Naive thymus-derived CD4-positive, alpha-beta T cell (primary cell): ENCODE measurements at regions of chr9 and their contacts with region 1.

Region 1: DNA sequence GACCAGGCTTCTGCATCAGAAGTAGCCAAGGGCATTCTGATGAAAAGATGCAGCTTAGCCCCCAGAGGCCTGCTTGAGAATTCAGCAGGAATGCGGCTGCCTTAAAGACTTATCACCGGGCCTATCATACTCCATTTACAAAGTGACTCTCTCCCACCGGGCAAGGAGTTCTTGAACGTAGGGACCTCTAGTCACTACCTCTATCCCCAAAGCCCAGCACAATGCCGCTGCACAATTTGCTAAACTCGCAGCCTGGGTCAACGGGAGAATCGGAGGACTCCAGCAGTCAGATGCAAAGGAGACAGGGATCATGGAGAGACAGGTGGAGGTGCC is 661 bp downstream of the PDCL start:
- DNase-seq: peak in 1 of 9 donors; percentile 11
- ATAC-seq: no peak
- H3K4me3 ChIP-seq: peak overlapping the region; percentile 97
- H3K4me3 Mint-ChIP-seq: peak overlapping the region; percentile 97 to 100 (median 99)
- H3K27ac ChIP-seq: peak overlapping the region; percentile 99
- H3K27ac Mint-ChIP-seq: peak overlapping the region; percentile 92 to 98 (median 98)
- H3K4me1 ChIP-seq: peaks cover 9 to 11% of the 10 kb centered on the region in 2 donors
- H3K4me1 Mint-ChIP-seq: peaks cover 23 to 51% (median 42%) of the 10 kb centered on the region in 7 donors
- H3K27me3 ChIP-seq: no peaks in the 10 kb centered on the region
- H3K27me3 Mint-ChIP-seq: no peaks in the 10 kb centered on the region

Region 2: DNA sequence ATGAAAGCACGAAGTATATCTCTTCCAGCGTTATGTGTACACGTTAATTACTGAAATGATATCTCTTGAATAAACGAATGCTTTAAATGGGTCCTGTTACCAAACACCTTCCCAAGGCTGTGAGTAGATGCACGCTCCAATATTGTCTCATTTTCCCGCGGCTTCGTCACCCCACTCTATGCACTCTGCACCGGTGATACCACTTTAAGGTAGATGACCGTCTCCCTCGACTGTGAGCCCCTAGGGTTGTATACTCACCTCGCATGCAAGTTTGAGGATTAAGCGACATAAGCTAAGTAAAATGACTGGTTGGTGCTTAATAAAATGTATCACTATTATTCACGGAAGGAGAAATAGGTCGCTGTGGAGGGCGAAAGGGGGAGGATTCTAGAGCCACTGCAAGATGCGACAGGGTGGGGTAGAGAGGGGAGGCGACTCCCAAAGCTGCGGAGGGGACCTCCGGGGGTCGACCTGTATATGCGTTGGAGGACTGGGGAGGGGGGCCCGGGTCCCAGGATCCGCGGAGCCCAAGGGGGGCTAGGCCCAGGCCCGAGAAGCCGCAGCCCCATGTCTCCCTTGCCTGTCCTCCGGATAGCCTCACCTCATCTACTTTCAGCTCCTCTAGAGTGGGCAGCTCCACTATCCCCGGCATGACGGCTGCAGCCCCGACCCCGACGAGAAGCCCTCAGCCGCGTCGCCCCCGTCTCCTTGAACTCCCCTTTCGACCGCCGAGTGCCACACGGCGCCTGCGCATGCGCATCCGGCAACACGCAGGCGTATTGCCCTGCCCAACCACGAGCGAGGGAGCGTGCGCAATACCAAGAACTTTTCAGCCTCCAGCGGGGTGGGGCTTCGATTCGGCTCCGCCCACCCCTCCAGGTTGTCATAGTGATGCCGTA is 668.5 kb before region 1 on chr9 and contains the starts of genes MORN5 and NDUFA8:
- CTCF ChIA-PET with region 1: no interaction called
- POLR2A ChIA-PET with region 1: no interaction called
- intact Hi-C with region 1: loop called in 1 of 2 experiments (anchors 5 kb)
- DNase-seq: peak; percentile 94 to 97 (median 96)
- ATAC-seq: peak; percentile 98
- H3K4me3 ChIP-seq: peak within 1 kb of the TSS; percentile 74
- H3K4me3 Mint-ChIP-seq: peak within 1 kb of the TSS; percentile 94 to 100 (median 99)
- H3K27ac ChIP-seq: peak within 1 kb of the TSS; percentile 88
- H3K27ac Mint-ChIP-seq: peak within 1 kb of the TSS; percentile 90 to 99 (median 96)
- H3K4me1 ChIP-seq: peaks cover 7% of the 10 kb centered on the region in 2 donors
- H3K4me1 Mint-ChIP-seq: peaks cover 23 to 51% (median 47%) of the 10 kb centered on the region in 7 donors
- H3K27me3 ChIP-seq: no peaks in the 10 kb centered on the region
- H3K27me3 Mint-ChIP-seq: peaks cover 8 to 25% (median 20%) of the 10 kb centered on the region in 5 donors
- total RNA-seq, gene MORN5: not detected
- total RNA-seq, gene NDUFA8: 6.7 to 35.0 (median 15.6) TPM

Region 3: GRCh38 chr9:122719218-122719617 is 108.5 kb before region 1 on chr9:
- CTCF ChIA-PET with region 1: no interaction called
- POLR2A ChIA-PET with region 1: no interaction called
- intact Hi-C with region 1: no loop called
- DNase-seq: no peak
- ATAC-seq: no peak
- H3K4me3 ChIP-seq: no peak overlapping the region
- H3K4me3 Mint-ChIP-seq: no peak overlapping the region
- H3K27ac ChIP-seq: no peak overlapping the region
- H3K27ac Mint-ChIP-seq: no peak overlapping the region
- H3K4me1 ChIP-seq: no peaks in the 10 kb centered on the region
- H3K4me1 Mint-ChIP-seq: no peaks in the 10 kb centered on the region
- H3K27me3 ChIP-seq: no peaks in the 10 kb centered on the region
- H3K27me3 Mint-ChIP-seq: peaks cover 0 to under 1% (median 0%) of the 10 kb centered on the region in 5 donors

Region 4: GRCh38 chr9:122816163-122816867 is 11.4 kb before region 1 on chr9:
- CTCF ChIA-PET with region 1: interaction called, 9 read pairs
- POLR2A ChIA-PET with region 1: interaction called, 50 read pairs
- intact Hi-C with region 1: loop called (anchors 1 kb)
- DNase-seq: peak in 8 of 9 donors; percentile 16 to 54 (median 46)
- ATAC-seq: peak; percentile 89
- H3K4me3 ChIP-seq: peak overlapping the region; percentile 29
- H3K4me3 Mint-ChIP-seq: peak overlapping the region; percentile 67 to 89 (median 81)
- H3K27ac ChIP-seq: peak overlapping the region; percentile 69
- H3K27ac Mint-ChIP-seq: peak overlapping the region; percentile 91 to 98 (median 97)
- H3K4me1 ChIP-seq: peaks cover 12% of the 10 kb centered on the region in 2 donors
- H3K4me1 Mint-ChIP-seq: peaks cover 19 to 53% (median 41%) of the 10 kb centered on the region in 7 donors
- H3K27me3 ChIP-seq: no peaks in the 10 kb centered on the region
- H3K27me3 Mint-ChIP-seq: no peaks in the 10 kb centered on the region

Region 5: GRCh38 chr9:122860317-122861142 is 32.8 kb after region 1 on chr9:
- CTCF ChIA-PET with region 1: no interaction called
- POLR2A ChIA-PET with region 1: no interaction called
- intact Hi-C with region 1: no loop called
- DNase-seq: no peak
- ATAC-seq: no peak
- H3K4me3 ChIP-seq: no peak overlapping the region
- H3K4me3 Mint-ChIP-seq: no peak overlapping the region
- H3K27ac ChIP-seq: no peak overlapping the region
- H3K27ac Mint-ChIP-seq: no peak overlapping the region
- H3K4me1 ChIP-seq: no peaks in the 10 kb centered on the region
- H3K4me1 Mint-ChIP-seq: peaks cover 0 to 6% (median 0%) of the 10 kb centered on the region in 7 donors
- H3K27me3 ChIP-seq: no peaks in the 10 kb centered on the region
- H3K27me3 Mint-ChIP-seq: no peaks in the 10 kb centered on the region

Region 6: DNA sequence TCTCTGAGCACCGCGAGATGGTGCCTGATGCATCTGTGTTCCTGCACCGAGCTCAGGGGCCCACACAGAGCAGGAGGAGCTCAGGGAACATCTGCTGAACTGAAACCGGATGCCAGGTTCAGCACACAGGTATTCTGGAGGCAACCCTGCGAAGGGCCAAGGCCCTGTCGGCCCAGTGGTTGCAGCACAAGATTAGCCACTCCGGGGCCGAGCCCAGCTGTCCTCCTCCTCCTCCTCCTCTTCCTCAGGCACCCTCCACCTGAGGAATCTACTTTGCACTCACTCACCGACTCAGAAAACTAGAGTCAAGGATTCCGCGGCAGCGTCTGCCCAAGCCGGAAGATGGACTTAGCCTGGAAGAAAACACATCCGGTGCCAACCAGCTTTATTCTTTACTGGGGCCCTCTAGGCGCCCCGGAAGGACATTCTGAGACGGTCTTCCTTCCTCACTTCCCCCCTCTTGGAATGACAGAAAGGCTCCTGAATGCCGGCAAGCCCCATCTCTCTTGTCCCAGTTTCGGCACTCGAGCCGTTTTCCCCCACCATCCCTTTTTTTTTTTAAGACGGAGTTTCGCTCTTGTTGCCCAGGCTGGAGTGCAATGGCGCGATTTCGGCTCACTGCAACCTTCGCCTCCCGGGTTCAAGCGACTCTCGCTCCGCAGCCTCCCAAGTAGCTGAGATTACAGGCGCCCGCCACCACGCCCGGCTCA is 85.4 kb after region 1 on chr9 and contains the start of gene ZBTB6:
- CTCF ChIA-PET with region 1: no interaction called
- POLR2A ChIA-PET with region 1: interaction called, 16 read pairs
- intact Hi-C with region 1: loop called in 1 of 2 experiments (anchors 2 kb)
- DNase-seq: peak; percentile 47 to 89 (median 77)
- ATAC-seq: peak; percentile 96
- H3K4me3 ChIP-seq: peak within 1 kb of the TSS; percentile 74
- H3K4me3 Mint-ChIP-seq: peak within 1 kb of the TSS; percentile 91 to 100 (median 98)
- H3K27ac ChIP-seq: peak within 1 kb of the TSS; percentile 92
- H3K27ac Mint-ChIP-seq: peak within 1 kb of the TSS; percentile 90 to 100 (median 99)
- H3K4me1 ChIP-seq: peaks cover 9 to 13% of the 10 kb centered on the region in 2 donors
- H3K4me1 Mint-ChIP-seq: peaks cover 12 to 46% (median 42%) of the 10 kb centered on the region in 7 donors
- H3K27me3 ChIP-seq: no peaks in the 10 kb centered on the region
- H3K27me3 Mint-ChIP-seq: no peaks in the 10 kb centered on the region
- total RNA-seq, gene ZBTB6: 3.7 to 17.8 (median 14.4) TPM

Region 7: DNA sequence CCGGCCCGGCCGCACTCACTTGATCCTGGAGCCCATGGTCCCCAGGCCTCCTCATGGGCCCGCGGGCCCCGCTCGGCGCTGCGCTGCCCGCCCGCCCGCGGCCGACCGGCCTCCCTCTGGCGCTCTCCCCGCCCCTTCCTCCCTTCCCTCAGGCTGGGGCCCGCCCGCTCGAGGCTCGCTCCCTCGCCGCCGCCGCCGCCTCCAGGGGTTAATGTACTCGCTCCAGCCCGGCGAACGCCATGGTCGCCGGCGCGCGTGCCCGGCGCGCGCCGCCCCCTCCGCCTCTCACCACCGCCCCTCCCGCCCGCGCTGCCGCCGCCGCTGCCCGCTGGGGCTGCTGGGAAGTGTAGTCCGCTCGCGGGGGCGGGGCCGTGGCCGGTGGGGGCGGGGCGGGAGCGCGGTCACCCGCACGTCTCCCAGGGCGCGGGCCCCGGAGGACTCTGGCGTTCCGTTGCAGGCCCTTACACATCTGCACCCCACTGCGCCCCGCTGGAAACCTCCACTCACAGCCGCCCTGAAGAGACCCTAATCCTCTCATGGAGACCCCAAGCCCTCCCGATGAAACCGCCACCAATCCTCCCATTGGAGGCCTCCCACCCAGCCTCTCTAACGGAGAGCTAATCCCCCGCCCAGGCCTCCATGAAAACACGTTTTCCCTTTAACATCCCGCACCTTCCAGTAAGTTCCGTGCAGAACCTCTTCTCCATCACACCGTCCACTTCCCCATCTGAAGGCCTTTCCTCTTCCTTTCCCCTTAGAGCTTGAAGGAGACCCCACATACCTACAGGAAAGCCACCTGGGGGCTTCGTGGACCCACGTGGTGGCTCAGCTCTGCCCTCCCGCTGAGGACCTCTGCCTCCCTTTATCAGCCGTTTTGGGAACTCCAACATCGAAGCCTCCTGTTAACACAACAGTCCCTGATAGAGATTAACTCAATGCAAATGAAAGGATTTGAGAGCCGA is 1102.4 kb after region 1 on chr9 and contains the start of gene DENND1A:
- CTCF ChIA-PET with region 1: no interaction called
- POLR2A ChIA-PET with region 1: no interaction called
- intact Hi-C with region 1: loop called in 1 of 2 experiments (anchors 5 kb)
- DNase-seq: peak; percentile 69 to 89 (median 79)
- ATAC-seq: peak; percentile 96
- H3K4me3 ChIP-seq: peak within 1 kb of the TSS; percentile 58
- H3K4me3 Mint-ChIP-seq: peak within 1 kb of the TSS; percentile 84 to 96 (median 88)
- H3K27ac ChIP-seq: peak within 1 kb of the TSS; percentile 73
- H3K27ac Mint-ChIP-seq: peak within 1 kb of the TSS; percentile 76 to 95 (median 88)
- H3K4me1 ChIP-seq: peaks cover 7 to 20% of the 10 kb centered on the region in 2 donors
- H3K4me1 Mint-ChIP-seq: peaks cover 32 to 48% (median 45%) of the 10 kb centered on the region in 7 donors
- H3K27me3 ChIP-seq: no peaks in the 10 kb centered on the region
- H3K27me3 Mint-ChIP-seq: peaks cover 0 to 14% (median 0%) of the 10 kb centered on the region in 5 donors
- total RNA-seq, gene DENND1A: 14.5 to 41.1 (median 17.1) TPM